ENCODE measurements at regions of chr19 and their contacts with region 1.

Region 1: GRCh38 chr19:58434217-58434616 is 5.7 kb downstream of the ZNF132 start:
- DNase-seq: no peak
- H3K4me3 ChIP-seq: no peak overlapping the region
- H3K27ac ChIP-seq: no peak overlapping the region
- H3K27me3 ChIP-seq: no peaks in the 10 kb centered on the region
- CTCF ChIP-seq: no peak

Region 2: DNA sequence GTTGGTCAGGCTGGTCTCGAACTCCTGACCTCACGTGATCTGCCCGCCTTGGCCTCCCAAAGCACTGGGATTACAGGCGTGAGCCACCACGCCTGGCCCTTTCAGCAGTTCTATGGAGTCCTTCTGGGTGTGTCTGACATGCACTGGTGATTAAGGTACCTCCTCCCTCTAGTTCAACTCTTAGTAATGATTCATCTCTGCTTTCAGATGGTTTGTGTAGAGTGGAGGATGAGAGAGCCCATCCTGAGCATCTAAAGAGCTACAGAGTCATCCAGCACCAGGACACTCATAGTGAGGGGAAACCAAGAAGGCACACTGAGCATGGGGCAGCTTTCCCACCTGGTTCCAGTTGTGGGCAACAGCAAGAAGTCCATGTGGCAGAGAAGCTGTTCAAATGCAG is 17.6 kb before region 1 on chr19:
- intact Hi-C with region 1: loop called in 1 of 2 experiments (anchors 2 kb)
- DNase-seq: no peak
- H3K4me3 ChIP-seq: no peak overlapping the region
- H3K27ac ChIP-seq: no peak overlapping the region
- H3K27me3 ChIP-seq: no peaks in the 10 kb centered on the region
- CTCF ChIP-seq: no peak

Region 3: DNA sequence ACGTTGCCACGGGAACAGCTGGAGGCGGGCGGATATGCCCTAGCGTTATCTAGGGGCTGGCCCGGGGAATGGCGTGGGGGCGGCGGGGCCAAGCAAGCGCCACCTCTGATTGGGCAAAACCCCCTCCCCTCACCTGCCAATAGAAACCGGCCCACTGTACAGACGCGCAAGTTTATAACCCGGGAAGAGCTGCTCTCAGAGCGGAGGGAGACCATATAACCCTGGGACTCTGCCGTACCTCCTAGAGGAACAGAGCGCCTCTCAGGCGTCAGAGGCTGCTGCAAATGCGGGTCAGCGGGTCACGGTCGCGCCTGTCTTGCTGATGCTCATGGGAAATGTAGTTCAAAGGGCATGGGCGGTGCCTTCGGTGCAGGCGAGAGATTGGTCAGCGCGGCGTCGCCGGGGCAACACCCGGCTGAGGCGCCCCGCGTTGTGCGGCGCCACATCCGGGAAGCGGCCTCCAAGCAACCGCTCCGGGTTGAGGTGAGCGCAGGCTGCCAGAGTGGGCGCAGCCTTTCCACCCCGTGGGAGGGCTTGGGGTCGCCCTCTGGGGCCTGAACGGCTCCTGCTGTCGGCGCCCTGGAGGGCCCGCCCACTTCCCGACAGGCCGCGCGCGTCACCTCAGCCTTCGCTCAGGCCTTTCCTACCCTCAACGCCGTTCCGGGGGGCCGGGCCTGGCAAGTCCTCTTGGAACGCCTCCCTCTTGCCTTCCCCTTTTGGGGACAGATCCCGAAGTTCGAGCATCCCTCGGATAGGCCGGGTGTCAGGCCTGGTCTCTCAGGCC is 41.7 kb after region 1 on chr19 and contains the start of gene ZNF446:
- intact Hi-C with region 1: no loop called
- DNase-seq: peak; percentile 94 to 99 (median 98)
- H3K4me3 ChIP-seq: peak within 1 kb of the TSS; percentile 63 to 97 (median 78)
- H3K27ac ChIP-seq: peak within 1 kb of the TSS; percentile 57 to 98 (median 91)
- H3K27me3 ChIP-seq: no peaks in the 10 kb centered on the region
- CTCF ChIP-seq: peak in 27 of 56 donors; percentile 2 to 49 (median 22)
- total RNA-seq, gene ZNF446: 9.0 to 21.1 (median 14.3) TPM